ENCODE measurements at regions of chr11 and their contacts with region 1.

Region 1: GRCh38 chr11:64358907-64359711 is at the start of gene RPS6KA4:
- DNase-seq: no peak
- H3K4me3 ChIP-seq: peak within 1 kb of the TSS; percentile 89
- H3K27me3 ChIP-seq: no peaks in the 10 kb centered on the region
- CTCF ChIP-seq: no peak
- polyA plus RNA-seq, gene RPS6KA4: 22.9 and 33.8 TPM in 2 replicates

Region 2: GRCh38 chr11:64317957-64318693 is 41.0 kb before region 1 on chr11 and contains the start of gene PRDX5:
- CTCF ChIA-PET with region 1: interaction called, 20 read pairs
- POLR2A ChIA-PET with region 1: no interaction called
- DNase-seq: peak; percentile 79
- H3K4me3 ChIP-seq: peak within 1 kb of the TSS; percentile 98
- H3K27me3 ChIP-seq: no peaks in the 10 kb centered on the region
- CTCF ChIP-seq: peak; percentile 27; the same call in 1 of the 2 replicates
- polyA plus RNA-seq, gene PRDX5: 398 and 468 TPM in 2 replicates

Region 3: GRCh38 chr11:64331557-64332371 is 27.3 kb before region 1 on chr11:
- CTCF ChIA-PET with region 1: interaction called, 11 read pairs
- POLR2A ChIA-PET with region 1: no interaction called
- DNase-seq: no peak
- H3K4me3 ChIP-seq: no peak overlapping the region
- H3K27me3 ChIP-seq: no peaks in the 10 kb centered on the region
- CTCF ChIP-seq: peak; percentile 81

Measured in BJ (cell line).